ENCODE measurements at regions of chr2 and their contacts with region 1.

Region 1: GRCh38 chr2:109348671-109349550 is 219.9 kb downstream of the SH3RF3 start:
- DNase-seq: peak; percentile 30 to 80 (median 59)
- ATAC-seq: peak; percentile 98
- H3K4me3 ChIP-seq: peak overlapping the region in 1 of 2 experiments; percentile 21
- H3K4me3 Mint-ChIP-seq: peak overlapping the region; percentile 71
- H3K27ac ChIP-seq: peak overlapping the region; percentile 49 to 74
- H3K27ac Mint-ChIP-seq: peak overlapping the region; percentile 95
- H3K4me1 ChIP-seq: peaks cover 48% of the 10 kb centered on the region
- H3K4me1 Mint-ChIP-seq: peaks cover 66% of the 10 kb centered on the region
- H3K27me3 ChIP-seq: no peaks in the 10 kb centered on the region
- H3K27me3 Mint-ChIP-seq: no peaks in the 10 kb centered on the region
- CTCF ChIP-seq: no peak

Region 2: GRCh38 chr2:108855194-108855593 is 493.7 kb before region 1 on chr2:
- CTCF ChIA-PET with region 1: interaction called, 4 read pairs
- POLR2A ChIA-PET with region 1: no interaction called
- intact Hi-C with region 1: loop called in 1 of 2 experiments (anchors 10 kb)
- DNase-seq: peak in 2 of 9 experiments; percentile 32 to 57
- ATAC-seq: peak; percentile 61
- H3K4me3 ChIP-seq: no peak overlapping the region
- H3K4me3 Mint-ChIP-seq: no peak overlapping the region
- H3K27ac ChIP-seq: no peak overlapping the region
- H3K27ac Mint-ChIP-seq: no peak overlapping the region
- H3K4me1 ChIP-seq: no peaks in the 10 kb centered on the region
- H3K4me1 Mint-ChIP-seq: peaks cover 4% of the 10 kb centered on the region
- H3K27me3 ChIP-seq: no peaks in the 10 kb centered on the region
- H3K27me3 Mint-ChIP-seq: no peaks in the 10 kb centered on the region
- CTCF ChIP-seq: peak; percentile 61

Region 3: GRCh38 chr2:109020217-109020637 is 328.7 kb before region 1 on chr2:
- CTCF ChIA-PET with region 1: no interaction called
- POLR2A ChIA-PET with region 1: no interaction called
- intact Hi-C with region 1: loop called in 1 of 2 experiments (anchors 5 kb)
- DNase-seq: peak in 2 of 9 experiments; percentile 24 to 48
- ATAC-seq: peak; percentile 92
- H3K4me3 ChIP-seq: no peak overlapping the region
- H3K4me3 Mint-ChIP-seq: peak overlapping the region; percentile 9
- H3K27ac ChIP-seq: no peak overlapping the region
- H3K27ac Mint-ChIP-seq: peak overlapping the region; percentile 23
- H3K4me1 ChIP-seq: peaks cover 16% of the 10 kb centered on the region
- H3K4me1 Mint-ChIP-seq: peaks cover 36% of the 10 kb centered on the region
- H3K27me3 ChIP-seq: no peaks in the 10 kb centered on the region
- H3K27me3 Mint-ChIP-seq: no peaks in the 10 kb centered on the region
- CTCF ChIP-seq: no peak

Region 4: GRCh38 chr2:109213646-109214417 is 135.1 kb before region 1 on chr2:
- CTCF ChIA-PET with region 1: no interaction called
- POLR2A ChIA-PET with region 1: no interaction called
- intact Hi-C with region 1: loop called in 1 of 2 experiments (anchors 10 kb)
- DNase-seq: peak; percentile 28 to 86 (median 66)
- ATAC-seq: peak; percentile 79
- H3K4me3 ChIP-seq: no peak overlapping the region
- H3K4me3 Mint-ChIP-seq: peak overlapping the region; percentile 46
- H3K27ac ChIP-seq: no peak overlapping the region
- H3K27ac Mint-ChIP-seq: peak overlapping the region; percentile 69
- H3K4me1 ChIP-seq: peaks cover 59% of the 10 kb centered on the region
- H3K4me1 Mint-ChIP-seq: peaks cover 74% of the 10 kb centered on the region
- H3K27me3 ChIP-seq: peaks cover 18 to 21% of the 10 kb centered on the region in 2 experiments
- H3K27me3 Mint-ChIP-seq: peaks cover 56% of the 10 kb centered on the region
- CTCF ChIP-seq: no peak

Region 5: DNA sequence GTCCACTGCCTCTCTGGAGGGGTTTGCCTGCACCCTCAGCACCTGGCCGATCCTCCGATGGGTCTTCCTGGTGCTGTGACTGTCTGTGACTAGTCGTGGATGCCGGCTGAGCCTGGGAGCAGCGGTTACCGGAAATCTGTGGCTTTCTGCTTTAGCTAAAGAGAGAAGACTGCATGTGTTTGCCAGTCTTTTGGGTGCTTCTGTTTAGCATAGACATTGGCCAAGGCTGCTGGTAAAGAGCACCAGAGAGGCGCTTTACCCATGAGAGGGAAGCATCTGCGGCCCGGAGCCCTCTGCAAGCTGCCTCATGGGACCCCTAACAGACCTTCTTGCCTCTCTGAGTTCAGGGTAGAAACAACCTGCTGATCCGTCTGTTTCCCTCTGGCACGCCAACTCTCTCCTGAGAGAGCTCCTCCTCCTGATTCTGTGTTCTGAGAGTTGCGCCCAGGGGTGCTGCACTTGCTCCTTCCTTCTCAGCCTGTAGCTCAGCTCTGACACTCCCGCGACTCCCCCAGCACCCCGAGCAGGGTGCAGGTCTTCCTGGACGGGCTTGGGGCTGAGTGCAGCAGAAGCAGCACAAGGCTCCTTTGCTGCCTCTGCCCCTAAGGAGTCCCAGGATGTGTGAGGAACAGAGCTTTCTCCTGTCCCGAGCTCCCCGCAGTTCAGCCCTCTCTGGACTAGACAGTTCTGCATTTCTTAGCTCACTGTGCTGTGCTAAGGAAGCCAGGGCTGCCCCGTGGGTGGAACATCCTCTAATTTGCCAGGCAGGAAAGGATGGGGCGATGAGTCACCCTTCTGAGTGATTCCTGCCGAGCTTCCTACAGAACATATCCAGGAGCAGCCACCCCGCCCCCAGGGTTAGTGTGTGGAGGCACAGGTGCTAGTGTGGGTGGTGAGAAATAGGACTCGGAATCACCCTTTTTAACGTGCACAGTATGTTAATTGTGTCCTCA is 16.7 kb before region 1 on chr2:
- CTCF ChIA-PET with region 1: interaction called, 4 read pairs
- POLR2A ChIA-PET with region 1: interaction called, 13 read pairs
- intact Hi-C with region 1: loop called in 1 of 2 experiments (anchors 2 kb)
- DNase-seq: peak in 5 of 9 experiments; percentile 15 to 62 (median 34)
- ATAC-seq: peak; percentile 42
- H3K4me3 ChIP-seq: peak overlapping the region; percentile 29 to 32
- H3K4me3 Mint-ChIP-seq: peak overlapping the region; percentile 82
- H3K27ac ChIP-seq: no peak overlapping the region
- H3K27ac Mint-ChIP-seq: peak overlapping the region; percentile 81
- H3K4me1 ChIP-seq: peaks cover 36% of the 10 kb centered on the region
- H3K4me1 Mint-ChIP-seq: peaks cover 68% of the 10 kb centered on the region
- H3K27me3 ChIP-seq: no peaks in the 10 kb centered on the region
- H3K27me3 Mint-ChIP-seq: no peaks in the 10 kb centered on the region
- CTCF ChIP-seq: no peak

Region 6: GRCh38 chr2:109410039-109410815 is 61.3 kb after region 1 on chr2:
- CTCF ChIA-PET with region 1: no interaction called
- POLR2A ChIA-PET with region 1: no interaction called
- intact Hi-C with region 1: no loop called
- DNase-seq: no peak
- ATAC-seq: no peak
- H3K4me3 ChIP-seq: no peak overlapping the region
- H3K4me3 Mint-ChIP-seq: no peak overlapping the region
- H3K27ac ChIP-seq: no peak overlapping the region
- H3K27ac Mint-ChIP-seq: no peak overlapping the region
- H3K4me1 ChIP-seq: no peaks in the 10 kb centered on the region
- H3K4me1 Mint-ChIP-seq: no peaks in the 10 kb centered on the region
- H3K27me3 ChIP-seq: no peaks in the 10 kb centered on the region
- H3K27me3 Mint-ChIP-seq: no peaks in the 10 kb centered on the region
- CTCF ChIP-seq: no peak

Measured in CD8-positive, alpha-beta T cell (primary cell).